ENCODE measurements at regions of chr14 and their contacts with region 1.

Region 1: DNA sequence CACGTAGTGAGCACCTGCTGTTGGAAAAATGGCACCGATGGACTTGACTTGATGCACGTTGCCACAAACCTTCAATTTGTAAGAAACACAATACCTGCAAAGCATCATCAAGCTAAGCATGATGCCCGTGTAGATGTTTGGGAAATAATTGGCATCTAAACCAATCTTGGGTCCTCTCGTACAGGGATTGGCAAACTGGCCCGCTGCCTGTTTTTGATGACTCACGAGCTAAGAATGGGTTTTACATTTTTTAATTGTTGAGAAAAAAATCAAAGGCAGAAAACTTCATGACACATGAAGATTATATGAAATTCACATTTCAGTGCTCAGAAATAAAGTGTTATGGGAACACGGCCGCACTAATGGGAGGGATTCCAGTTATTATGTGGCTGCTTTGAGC is 10.9 kb downstream of the MTA1 start:
- DNase-seq: no peak
- H3K4me3 ChIP-seq: no peak overlapping the region
- H3K27me3 ChIP-seq: no peaks in the 10 kb centered on the region
- CTCF ChIP-seq: no peak

Region 2: DNA sequence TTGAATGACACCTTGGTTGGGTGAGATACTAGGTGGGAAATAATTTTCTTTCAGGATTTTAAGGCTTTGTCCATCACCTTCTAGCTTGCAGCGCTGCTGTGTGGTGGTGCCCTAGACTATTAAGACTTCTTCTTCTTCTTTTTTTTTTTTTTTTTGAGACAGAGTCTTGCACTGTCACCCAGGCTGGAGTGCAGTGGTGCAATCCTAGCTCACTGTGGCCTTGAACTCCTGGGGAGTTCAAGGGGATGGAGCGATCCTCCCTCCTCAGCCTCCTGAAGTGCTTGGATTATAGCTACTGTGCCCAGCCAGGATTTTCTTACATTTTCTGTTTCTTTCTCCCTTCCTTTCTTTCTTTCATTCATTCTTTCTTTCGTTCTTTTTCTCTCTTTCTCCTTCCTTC is 21.2 kb before region 1 on chr14:
- CTCF ChIA-PET with region 1: no interaction called
- POLR2A ChIA-PET with region 1: interaction called, 13 read pairs
- DNase-seq: no peak
- H3K4me3 ChIP-seq: no peak overlapping the region
- H3K27me3 ChIP-seq: peaks cover 3% of the 10 kb centered on the region; the same call in 1 of the 2 replicates
- CTCF ChIP-seq: no peak

Region 3: GRCh38 chr14:105440989-105441485 is 10.5 kb after region 1 on chr14:
- CTCF ChIA-PET with region 1: no interaction called
- POLR2A ChIA-PET with region 1: no interaction called
- DNase-seq: no peak
- H3K4me3 ChIP-seq: no peak overlapping the region
- H3K27me3 ChIP-seq: no peaks in the 10 kb centered on the region
- CTCF ChIP-seq: no peak

Region 4: DNA sequence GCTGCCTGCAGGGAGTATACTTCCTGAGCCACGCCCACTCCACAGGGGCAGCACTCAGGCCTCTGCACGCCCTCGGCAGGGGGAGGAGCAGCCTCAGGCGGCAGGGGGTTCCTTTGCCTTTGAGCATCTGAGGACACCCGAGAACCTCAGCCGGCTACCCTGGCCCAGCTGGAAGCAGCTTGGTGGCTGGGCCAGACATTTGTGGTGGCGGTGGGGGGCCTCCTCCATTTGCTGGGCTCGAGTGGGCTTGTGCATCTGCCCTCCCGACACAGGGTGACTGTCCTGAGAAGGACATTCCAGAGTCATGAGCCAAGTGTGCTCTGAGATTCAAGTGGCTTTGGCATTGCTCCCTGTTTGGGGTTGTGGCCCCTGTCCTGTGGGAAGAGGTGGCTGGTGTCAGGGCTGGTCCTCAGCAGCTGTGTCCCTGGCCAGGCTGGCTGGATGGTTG is 35.1 kb after region 1 on chr14:
- CTCF ChIA-PET with region 1: no interaction called
- POLR2A ChIA-PET with region 1: no interaction called
- DNase-seq: no peak
- H3K4me3 ChIP-seq: no peak overlapping the region
- H3K27me3 ChIP-seq: no peaks in the 10 kb centered on the region
- CTCF ChIP-seq: no peak